ENCODE measurements at regions of chr12 and their contacts with region 1.

Region 1: DNA sequence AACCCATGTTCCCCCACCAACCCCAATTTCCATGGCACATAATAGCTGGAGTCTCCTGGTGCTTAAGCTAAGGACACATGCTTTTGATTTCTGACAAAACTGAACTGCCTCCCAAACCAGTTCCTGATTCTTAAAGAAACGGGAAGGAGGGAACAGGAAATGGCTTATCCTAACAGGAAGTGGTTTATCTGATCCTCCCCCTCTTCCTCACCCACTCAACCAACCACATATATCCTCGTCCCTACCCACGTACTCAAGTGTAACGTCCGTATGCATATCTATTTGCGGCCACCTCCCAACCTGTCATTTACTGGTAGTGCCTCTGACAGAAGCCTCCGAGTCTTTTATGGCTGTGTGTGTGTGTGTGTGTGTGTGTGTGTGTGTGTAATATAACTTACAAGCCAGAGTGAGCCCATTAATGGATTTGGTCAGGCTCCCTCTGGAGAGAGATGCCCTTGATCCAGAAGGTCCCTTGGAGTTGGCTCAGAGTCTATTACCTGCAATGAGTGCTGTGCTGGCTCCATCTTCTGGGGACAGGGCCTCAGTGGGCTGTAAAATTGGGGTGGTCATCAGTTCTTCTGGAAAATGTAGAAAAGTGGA is 7.7 kb downstream of the DAZAP2 start:
- DNase-seq: no peak
- ATAC-seq: no peak
- H3K4me3 ChIP-seq: no peak overlapping the region
- H3K27ac ChIP-seq: no peak overlapping the region
- H3K4me1 ChIP-seq: no peaks in the 10 kb centered on the region
- H3K27me3 ChIP-seq: no peaks in the 10 kb centered on the region
- CTCF ChIP-seq: no peak; the same call in 1 of the 2 replicates

Region 2: DNA sequence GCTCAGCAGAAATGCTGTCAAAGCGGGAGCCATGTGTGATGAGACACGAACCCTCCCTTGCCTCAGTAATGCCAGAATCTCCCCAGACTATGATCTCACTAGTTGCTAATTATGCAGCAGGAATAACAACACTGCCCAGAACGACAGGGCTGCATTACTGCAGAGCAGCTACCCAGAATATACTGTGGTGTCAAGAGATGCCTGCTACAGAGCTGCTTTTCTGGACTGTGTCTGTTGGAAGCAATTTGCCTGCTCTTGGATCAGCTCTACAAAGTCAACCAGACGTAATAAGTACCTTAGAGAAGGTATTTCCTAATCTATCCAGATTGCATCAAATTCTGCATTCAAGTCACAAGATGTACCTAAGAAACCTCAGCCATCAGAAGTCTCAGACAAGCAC is 168.4 kb before region 1 on chr12:
- CTCF ChIA-PET with region 1: no interaction called
- POLR2A ChIA-PET with region 1: interaction called, 11 read pairs
- in situ Hi-C with region 1: no loop called
- intact Hi-C with region 1: no loop called
- DNase-seq: no peak
- ATAC-seq: no peak
- H3K4me3 ChIP-seq: no peak overlapping the region
- H3K27ac ChIP-seq: no peak overlapping the region
- H3K4me1 ChIP-seq: peaks cover 9% of the 10 kb centered on the region
- H3K27me3 ChIP-seq: no peaks in the 10 kb centered on the region
- CTCF ChIP-seq: no peak

Region 3: GRCh38 chr12:51293696-51294095 is 47.3 kb after region 1 on chr12:
- CTCF ChIA-PET with region 1: no interaction called
- POLR2A ChIA-PET with region 1: interaction called, 10 read pairs
- in situ Hi-C with region 1: no loop called
- intact Hi-C with region 1: no loop called
- DNase-seq: no peak
- ATAC-seq: no peak
- H3K4me3 ChIP-seq: no peak overlapping the region
- H3K27ac ChIP-seq: no peak overlapping the region
- H3K4me1 ChIP-seq: no peaks in the 10 kb centered on the region
- H3K27me3 ChIP-seq: no peaks in the 10 kb centered on the region
- CTCF ChIP-seq: no peak

Region 4: DNA sequence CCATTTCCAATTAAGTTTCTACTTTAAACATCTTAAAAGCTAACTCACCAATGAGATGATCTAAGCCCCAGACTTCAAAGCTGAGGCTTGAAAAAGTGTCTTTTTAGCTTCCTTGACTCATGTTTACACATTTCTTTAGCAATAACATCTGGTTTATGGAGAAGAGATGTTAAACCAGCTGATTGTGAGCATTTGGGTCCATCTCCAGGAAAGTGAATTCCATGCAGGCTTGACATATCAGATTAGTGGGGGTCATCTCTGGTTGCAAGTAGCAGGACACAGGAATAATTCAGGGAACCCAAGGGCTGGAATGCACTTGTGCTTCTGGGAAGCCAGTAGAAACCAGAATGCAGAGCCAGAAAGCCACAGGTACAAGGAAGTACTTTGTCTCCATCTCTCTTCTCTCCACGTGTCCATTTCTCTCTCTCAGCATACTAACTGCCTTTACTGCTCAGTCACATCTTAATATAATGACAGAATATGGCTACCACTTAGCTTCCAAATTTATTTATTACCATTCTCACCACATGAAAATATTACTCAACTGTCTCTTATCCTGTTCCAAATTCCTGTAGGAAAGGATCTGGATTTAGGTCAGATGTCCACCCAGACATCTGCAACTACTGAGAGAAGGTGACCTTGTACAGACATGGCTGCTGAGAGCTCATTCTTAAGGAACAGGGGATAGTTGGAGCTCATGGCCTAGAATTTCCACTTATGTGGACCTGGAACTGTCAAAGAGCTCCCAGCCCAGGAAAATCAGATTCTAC is 449.1 kb after region 1 on chr12:
- CTCF ChIA-PET with region 1: no interaction called
- POLR2A ChIA-PET with region 1: no interaction called
- in situ Hi-C with region 1: no loop called
- intact Hi-C with region 1: no loop called
- DNase-seq: no peak
- ATAC-seq: no peak
- H3K4me3 ChIP-seq: no peak overlapping the region
- H3K27ac ChIP-seq: no peak overlapping the region
- H3K4me1 ChIP-seq: no peaks in the 10 kb centered on the region
- H3K27me3 ChIP-seq: no peaks in the 10 kb centered on the region
- CTCF ChIP-seq: no peak

Measured in Panc1 (cell line).